ENCODE measurements at regions of chr22 and their contacts with region 1.

Region 1: GRCh38 chr22:39932918-39933649 is 27.1 kb upstream of the TMA7B start:
- DNase-seq: no peak
- ATAC-seq: peak; percentile 82
- H3K4me3 ChIP-seq: no peak overlapping the region
- H3K27ac ChIP-seq: no peak overlapping the region
- H3K4me1 ChIP-seq: peaks cover 37% of the 10 kb centered on the region
- H3K27me3 ChIP-seq: no peaks in the 10 kb centered on the region
- CTCF ChIP-seq: peak; percentile 56 to 91 (median 84)
- EP300 ChIP-seq: no peak
- POLR2A ChIP-seq: no peak
- RAD21 ChIP-seq: peak; percentile 63

Region 2: DNA sequence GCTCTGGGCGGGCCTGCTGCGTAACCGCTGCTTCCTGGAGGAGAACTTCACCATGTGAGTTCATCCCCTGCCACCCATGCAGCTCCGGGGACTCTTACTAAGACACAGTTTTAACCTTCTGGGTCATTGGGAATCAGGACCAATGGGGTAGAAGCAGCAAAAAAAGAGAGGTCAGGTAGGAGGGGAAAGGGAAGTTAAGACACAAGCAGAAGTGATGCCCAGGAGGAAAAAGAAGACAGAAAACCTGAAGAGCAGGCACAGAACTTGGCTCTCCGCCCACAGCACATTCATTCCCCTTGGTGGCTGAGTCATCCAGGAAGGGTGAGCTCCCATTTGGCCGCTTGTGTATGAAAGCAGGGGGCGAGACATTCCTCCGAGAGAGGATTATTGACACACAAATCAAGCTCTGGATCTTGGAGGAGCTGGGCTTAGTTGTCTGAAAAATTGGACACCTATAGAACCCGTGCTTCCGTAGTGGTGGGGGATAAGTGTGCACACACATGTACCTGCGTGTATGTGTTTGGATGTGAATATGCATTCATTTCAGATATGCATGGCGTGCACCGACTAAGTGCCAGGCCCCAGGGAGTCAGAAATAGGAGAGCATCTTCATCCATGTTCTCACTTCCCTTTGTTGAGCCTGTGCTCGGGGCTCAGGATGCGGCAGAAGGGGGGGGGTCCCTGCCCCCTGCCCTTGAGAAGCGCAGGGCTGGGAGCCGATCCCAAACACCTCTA is 298.2 kb before region 1 on chr22:
- CTCF ChIA-PET with region 1: no interaction called
- POLR2A ChIA-PET with region 1: no interaction called
- RAD21 ChIA-PET with region 1: no interaction called
- SMC1A ChIA-PET with region 1: no interaction called
- in situ Hi-C with region 1: no loop called
- intact Hi-C with region 1: loop called (anchors 10 kb)
- DNase-seq: no peak
- ATAC-seq: no peak
- H3K4me3 ChIP-seq: no peak overlapping the region
- H3K27ac ChIP-seq: no peak overlapping the region
- H3K4me1 ChIP-seq: no peaks in the 10 kb centered on the region
- H3K27me3 ChIP-seq: no peaks in the 10 kb centered on the region
- CTCF ChIP-seq: no peak
- EP300 ChIP-seq: no peak
- POLR2A ChIP-seq: no peak
- RAD21 ChIP-seq: no peak

Region 3: DNA sequence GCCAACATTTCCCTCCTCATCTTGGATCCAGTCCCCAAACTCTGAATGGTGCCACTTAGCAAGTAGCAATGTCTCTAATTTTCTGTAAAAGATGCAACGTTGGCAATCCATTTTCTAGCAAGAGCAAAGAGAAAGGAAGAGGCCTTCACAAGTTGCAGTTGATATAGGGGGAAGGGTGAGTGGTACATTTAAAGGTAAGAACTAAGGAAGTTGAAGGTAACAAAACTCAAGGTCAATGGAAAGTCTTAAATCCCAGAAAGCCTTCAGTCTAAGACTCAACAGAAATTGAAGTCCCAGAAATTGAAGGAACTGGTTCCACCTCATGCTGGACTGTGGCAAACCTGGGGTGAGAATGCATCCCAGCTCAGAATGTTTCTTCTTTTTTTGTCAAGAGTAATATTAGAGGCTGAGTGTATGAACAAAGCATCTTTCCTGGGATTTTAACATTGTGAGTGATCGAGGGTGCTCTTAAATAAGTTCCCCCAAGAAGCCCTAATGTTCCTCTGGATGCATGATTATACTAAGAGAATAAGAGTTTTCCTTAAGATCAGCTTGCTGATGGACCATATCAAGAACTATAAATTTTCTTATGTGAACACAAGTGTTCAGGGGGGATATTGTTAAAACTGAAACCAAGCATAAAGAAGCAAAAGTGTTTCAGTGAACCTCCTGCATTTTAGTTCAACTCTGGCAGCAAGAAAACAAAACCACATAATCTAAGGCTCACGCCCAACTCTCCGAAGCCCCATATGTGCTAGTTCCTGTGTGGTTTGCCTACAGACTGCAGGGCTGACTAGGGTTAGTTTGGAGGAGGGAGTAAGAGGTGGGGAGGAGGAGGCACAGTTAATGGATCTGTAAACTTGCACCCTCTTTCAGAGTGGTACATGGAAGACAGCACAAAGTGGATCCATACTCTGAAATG is 32.5 kb before region 1 on chr22 and contains the start of gene GRAP2:
- CTCF ChIA-PET with region 1: interaction called, 11 read pairs
- POLR2A ChIA-PET with region 1: interaction called, 3 read pairs
- RAD21 ChIA-PET with region 1: interaction called, 11 read pairs
- SMC1A ChIA-PET with region 1: interaction called, 102 read pairs
- in situ Hi-C with region 1: no loop called
- intact Hi-C with region 1: no loop called
- DNase-seq: peak; percentile 94
- ATAC-seq: peak; percentile 84
- H3K4me3 ChIP-seq: peak within 1 kb of the TSS; percentile 89
- H3K27ac ChIP-seq: peak within 1 kb of the TSS; percentile 87
- H3K4me1 ChIP-seq: peaks cover 24% of the 10 kb centered on the region
- H3K27me3 ChIP-seq: no peaks in the 10 kb centered on the region
- CTCF ChIP-seq: no peak
- EP300 ChIP-seq: peak; percentile 30 to 49; a peak in 1 of 4 replicates
- POLR2A ChIP-seq: peak; percentile 73
- RAD21 ChIP-seq: 0 out of 2 replicates have a peak, but pooled peaks have one; percentile 5
- polyA plus RNA-seq, gene GRAP2: 3.3 to 5.4 TPM

Region 4: DNA sequence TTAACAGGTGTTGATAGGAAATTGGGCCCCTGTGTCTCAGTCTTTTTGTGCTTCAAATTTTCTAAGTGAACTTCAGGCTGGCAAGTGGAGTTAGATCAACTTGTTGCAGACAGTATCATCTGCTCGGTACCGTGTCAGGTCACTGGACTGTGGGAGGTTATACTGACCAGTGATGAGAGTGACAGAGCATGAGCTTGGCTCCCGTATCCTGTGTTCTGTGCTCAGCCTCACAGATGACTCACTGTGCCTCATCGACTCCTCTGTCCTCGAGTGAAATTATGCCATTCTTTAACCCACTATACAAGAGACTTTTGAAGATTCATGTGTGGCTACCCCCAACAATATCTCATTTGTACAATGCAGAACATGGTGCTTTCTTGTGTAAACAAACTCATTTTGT is 24.3 kb before region 1 on chr22:
- CTCF ChIA-PET with region 1: interaction called, 11 read pairs
- POLR2A ChIA-PET with region 1: interaction called, 4 read pairs
- RAD21 ChIA-PET with region 1: interaction called, 24 read pairs
- SMC1A ChIA-PET with region 1: interaction called, 102 read pairs
- in situ Hi-C with region 1: no loop called
- intact Hi-C with region 1: no loop called
- DNase-seq: no peak
- ATAC-seq: peak; percentile 64
- H3K4me3 ChIP-seq: peak overlapping the region; percentile 42
- H3K27ac ChIP-seq: peak overlapping the region; percentile 71
- H3K4me1 ChIP-seq: peaks cover 35% of the 10 kb centered on the region
- H3K27me3 ChIP-seq: no peaks in the 10 kb centered on the region
- CTCF ChIP-seq: no peak
- EP300 ChIP-seq: no peak
- POLR2A ChIP-seq: no peak
- RAD21 ChIP-seq: no peak

Region 5: DNA sequence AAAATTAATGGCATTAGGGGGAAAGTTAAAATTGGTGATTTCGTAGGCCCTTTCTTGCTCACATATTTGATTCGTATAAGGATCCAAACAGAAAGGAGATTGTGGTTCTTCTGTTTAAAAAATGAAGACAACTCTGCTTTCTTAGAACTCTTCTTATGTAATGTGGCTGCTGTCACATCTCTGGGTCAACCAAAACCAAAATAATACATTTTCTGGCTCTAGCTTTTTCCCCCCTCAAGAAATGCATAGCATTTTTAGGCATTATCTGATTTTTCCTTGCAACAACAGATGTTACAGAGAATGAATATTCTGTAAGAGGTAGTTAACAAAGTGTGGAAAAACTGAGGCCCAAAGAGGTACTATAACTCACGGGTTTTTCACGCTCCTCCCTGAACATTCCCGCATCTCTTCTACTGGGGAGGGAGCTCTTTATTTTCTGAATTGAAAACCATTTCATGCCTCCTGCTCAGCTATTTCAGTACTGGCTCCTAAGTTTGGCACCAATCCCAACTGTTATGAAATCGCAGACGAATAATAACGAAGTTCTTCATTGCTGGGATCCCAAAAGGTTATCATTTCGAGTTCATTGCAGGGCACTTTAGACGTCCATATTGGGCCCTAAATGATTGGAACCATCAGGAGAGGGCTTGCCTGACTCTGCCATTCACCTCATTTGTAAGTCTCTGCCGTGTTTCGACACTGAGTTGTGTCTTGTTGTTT is 15.1 kb before region 1 on chr22:
- CTCF ChIA-PET with region 1: interaction called, 39 read pairs
- POLR2A ChIA-PET with region 1: interaction called, 7 read pairs
- RAD21 ChIA-PET with region 1: interaction called, 9 read pairs
- SMC1A ChIA-PET with region 1: interaction called, 102 read pairs
- in situ Hi-C with region 1: no loop called
- intact Hi-C with region 1: no loop called
- DNase-seq: no peak
- ATAC-seq: no peak
- H3K4me3 ChIP-seq: no peak overlapping the region
- H3K27ac ChIP-seq: no peak overlapping the region
- H3K4me1 ChIP-seq: peaks cover 9% of the 10 kb centered on the region; the same call in 1 of the 2 replicates
- H3K27me3 ChIP-seq: no peaks in the 10 kb centered on the region
- CTCF ChIP-seq: no peak
- EP300 ChIP-seq: no peak
- POLR2A ChIP-seq: no peak
- RAD21 ChIP-seq: no peak

Region 6: DNA sequence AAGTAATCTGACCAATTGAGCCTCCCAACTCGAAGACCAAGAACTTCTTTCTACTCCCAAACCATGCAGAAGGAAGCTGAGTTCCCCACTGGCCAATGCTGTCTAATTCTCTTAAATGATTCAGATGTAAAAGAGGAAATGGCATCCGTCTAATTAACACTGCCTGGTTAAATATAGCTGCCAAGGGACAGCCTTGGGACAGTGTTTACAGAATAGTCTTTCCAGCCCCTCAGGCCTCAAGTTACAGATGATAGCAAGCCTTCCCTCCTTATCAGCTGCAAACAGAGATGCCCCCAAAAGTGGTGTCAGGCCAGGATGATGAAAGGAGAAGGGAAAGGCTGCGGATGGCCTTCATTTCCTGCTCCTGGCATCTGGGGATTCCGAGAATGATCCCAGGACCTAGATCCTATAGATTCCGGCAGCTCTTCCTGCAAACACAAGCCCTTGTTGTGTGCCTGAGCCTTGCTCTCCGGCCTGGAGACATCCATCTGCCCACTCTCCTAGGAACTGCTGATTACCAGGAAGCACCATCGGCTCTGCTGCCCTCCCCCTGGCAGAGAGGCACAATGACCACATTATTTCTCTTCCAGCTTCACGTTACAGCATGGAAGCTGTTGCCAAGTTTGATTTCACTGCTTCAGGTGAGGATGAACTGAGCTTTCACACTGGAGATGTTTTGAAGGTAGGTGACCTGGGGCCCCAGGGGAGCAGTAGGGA is 13.6 kb after region 1 on chr22:
- CTCF ChIA-PET with region 1: interaction called, 37 read pairs
- POLR2A ChIA-PET with region 1: interaction called, 5 read pairs
- RAD21 ChIA-PET with region 1: interaction called, 13 read pairs
- SMC1A ChIA-PET with region 1: interaction called, 32 read pairs
- in situ Hi-C with region 1: no loop called
- intact Hi-C with region 1: no loop called
- DNase-seq: no peak
- ATAC-seq: peak; percentile 54
- H3K4me3 ChIP-seq: no peak overlapping the region
- H3K27ac ChIP-seq: no peak overlapping the region
- H3K4me1 ChIP-seq: peaks cover 46% of the 10 kb centered on the region
- H3K27me3 ChIP-seq: no peaks in the 10 kb centered on the region
- CTCF ChIP-seq: no peak
- EP300 ChIP-seq: no peak
- POLR2A ChIP-seq: no peak
- RAD21 ChIP-seq: no peak

Region 7: DNA sequence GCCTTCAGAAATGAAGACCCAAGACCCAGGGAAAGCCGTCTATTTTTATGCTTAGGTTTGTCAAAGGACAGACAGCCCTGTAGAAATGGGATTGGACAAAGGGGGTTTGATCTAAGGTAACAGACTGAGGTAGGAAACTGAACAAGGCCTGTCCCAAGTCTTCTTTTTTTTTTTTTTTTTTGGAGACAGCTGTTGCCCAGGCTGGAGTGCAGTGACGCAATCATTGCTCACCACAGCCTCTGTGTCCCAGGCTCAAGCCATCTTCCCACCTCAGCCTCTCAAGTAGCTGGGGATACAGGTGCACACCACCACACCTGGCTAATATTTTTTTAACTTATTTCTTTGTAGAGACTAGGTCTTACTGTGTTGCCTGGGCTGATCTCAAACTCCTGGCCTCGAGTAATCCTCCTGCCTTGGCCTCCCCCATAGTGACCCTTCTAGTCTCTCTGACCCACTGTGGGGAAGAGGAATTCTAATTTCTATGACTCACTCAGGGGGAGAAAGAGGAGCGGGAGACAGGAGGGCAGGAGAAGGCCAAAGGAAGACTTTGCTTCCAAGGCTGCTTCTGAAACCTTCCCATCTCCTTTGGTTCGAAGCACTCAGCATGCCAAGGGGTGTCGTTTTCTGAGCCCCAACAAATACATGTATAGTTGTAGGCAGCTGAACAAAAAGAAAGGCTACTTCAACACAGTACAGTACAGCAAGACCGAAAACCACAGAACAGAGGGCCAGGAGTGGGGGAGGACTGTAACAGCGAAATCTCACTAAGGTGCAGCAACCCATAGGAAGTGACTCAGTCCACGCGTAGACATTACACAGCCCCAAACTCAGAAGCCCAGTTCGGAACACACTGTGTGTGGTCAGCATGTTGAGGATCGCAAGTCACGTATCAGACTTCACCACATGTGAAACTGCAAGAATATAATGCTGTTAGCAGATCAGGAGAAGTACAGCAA is 28.0 kb after region 1 on chr22:
- CTCF ChIA-PET with region 1: interaction called, 11 read pairs
- POLR2A ChIA-PET with region 1: no interaction called
- RAD21 ChIA-PET with region 1: interaction called, 4 read pairs
- SMC1A ChIA-PET with region 1: interaction called, 3 read pairs
- in situ Hi-C with region 1: no loop called
- intact Hi-C with region 1: no loop called
- DNase-seq: peak; percentile 96
- ATAC-seq: peak; percentile 94
- H3K4me3 ChIP-seq: peak overlapping the region; percentile 33; the same call in 1 of the 2 replicates
- H3K27ac ChIP-seq: peak overlapping the region; percentile 17
- H3K4me1 ChIP-seq: peaks cover 49% of the 10 kb centered on the region
- H3K27me3 ChIP-seq: no peaks in the 10 kb centered on the region
- CTCF ChIP-seq: no peak
- EP300 ChIP-seq: peak; percentile 65 to 86; a peak in 2 of 4 replicates
- POLR2A ChIP-seq: peak; percentile 37; the same call in 1 of the 2 replicates
- RAD21 ChIP-seq: no peak

Region 8: GRCh38 chr22:40332319-40332781 is 399.3 kb after region 1 on chr22:
- CTCF ChIA-PET with region 1: no interaction called
- POLR2A ChIA-PET with region 1: no interaction called
- RAD21 ChIA-PET with region 1: no interaction called
- SMC1A ChIA-PET with region 1: no interaction called
- in situ Hi-C with region 1: no loop called
- intact Hi-C with region 1: no loop called
- DNase-seq: no peak
- ATAC-seq: no peak
- H3K4me3 ChIP-seq: no peak overlapping the region
- H3K27ac ChIP-seq: no peak overlapping the region
- H3K4me1 ChIP-seq: peaks cover 35% of the 10 kb centered on the region
- H3K27me3 ChIP-seq: no peaks in the 10 kb centered on the region
- CTCF ChIP-seq: no peak
- EP300 ChIP-seq: no peak
- POLR2A ChIP-seq: no peak
- RAD21 ChIP-seq: no peak